IMR-90 (cell line): ENCODE measurements at regions of chr18 and their contacts with region 1.

Region 1: DNA sequence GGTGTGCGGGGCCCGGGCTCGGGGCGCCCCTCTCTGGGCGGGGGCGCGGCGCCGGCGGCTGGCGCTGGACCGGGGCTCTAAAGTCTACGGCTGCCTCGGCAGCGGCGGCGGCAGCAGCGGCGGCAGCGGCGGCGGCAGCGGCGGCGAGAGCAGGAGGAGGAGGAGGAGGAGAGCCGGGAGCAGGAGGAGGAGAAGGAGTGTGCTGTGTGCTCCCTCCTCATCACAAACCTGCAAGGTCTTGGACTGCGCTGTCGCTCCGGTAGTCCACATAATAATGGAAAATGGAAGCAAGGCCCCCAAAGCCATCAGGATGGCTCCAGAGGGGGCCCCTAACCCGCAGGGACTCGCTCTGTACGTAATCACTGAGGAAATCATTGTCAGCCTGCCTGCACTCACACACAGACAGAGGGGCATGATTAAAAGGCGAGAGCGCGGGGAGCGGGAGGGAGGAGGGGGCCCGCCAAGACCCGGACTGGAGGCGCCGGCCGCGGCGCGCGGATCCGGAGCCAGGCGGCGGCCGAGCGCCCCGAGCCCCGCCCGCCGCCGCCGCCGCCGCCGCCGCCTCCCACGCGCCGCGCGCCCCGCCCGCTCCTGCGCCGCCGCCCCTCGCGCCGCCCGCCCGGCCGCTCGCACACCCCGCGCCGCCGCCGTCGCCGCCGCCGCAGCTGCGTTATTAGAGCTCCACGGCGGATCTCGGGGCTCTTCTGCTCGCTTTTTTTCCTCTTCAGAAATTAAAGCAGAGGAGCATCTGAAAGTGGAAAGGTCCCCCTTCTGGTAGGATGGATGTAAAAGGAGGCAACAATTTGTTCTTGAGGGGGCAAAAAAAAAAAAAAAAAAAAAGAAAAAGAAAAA is at the start of gene ZNF521:
- DNase-seq: peak; percentile 92
- ATAC-seq: peak; percentile 87
- H3K4me3 ChIP-seq: peak within 1 kb of the TSS; percentile 97
- H3K27ac ChIP-seq: peak within 1 kb of the TSS; percentile 99
- H3K4me1 ChIP-seq: 0 out of 2 replicates have a peak, but pooled peaks cover 2% of the 10 kb centered on the region
- H3K27me3 ChIP-seq: no peaks in the 10 kb centered on the region
- CTCF ChIP-seq: peak; percentile 49
- POLR2A ChIP-seq: peak; percentile 59; the same call in 1 of the 2 replicates
- RAD21 ChIP-seq: peak; percentile 53
- total RNA-seq, gene ZNF521: 44.7 and 59.3 TPM in 2 replicates

Region 2: DNA sequence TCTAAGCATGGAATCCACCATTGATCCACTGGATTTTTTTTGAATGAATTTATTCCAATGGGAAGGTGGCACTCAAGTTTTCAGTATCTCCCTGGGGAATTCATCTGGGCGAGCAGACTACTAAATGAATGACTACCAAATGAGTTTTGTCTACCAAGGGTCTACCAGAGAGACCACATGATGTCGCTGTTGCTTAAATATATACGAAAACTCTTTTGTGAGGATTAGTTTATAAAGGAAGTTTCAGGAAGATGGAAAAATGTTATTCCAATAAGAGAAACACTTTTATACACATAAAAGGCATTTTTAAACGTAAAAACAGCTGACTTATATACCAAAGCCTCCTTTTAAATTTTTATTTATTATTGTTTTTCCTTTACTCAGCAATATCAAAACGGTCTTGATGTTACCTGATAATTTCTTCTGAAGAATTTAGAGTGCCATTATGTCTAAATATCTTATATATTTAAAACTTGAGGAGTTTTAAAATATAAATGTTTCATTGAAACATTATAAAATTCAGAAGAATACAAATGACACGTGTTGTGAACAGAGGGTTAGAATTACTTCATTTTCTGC is 751.8 kb before region 1 on chr18:
- CTCF ChIA-PET with region 1: no interaction called
- POLR2A ChIA-PET with region 1: interaction called, 4 read pairs
- dilution Hi-C with region 1: no loop called
- in situ Hi-C with region 1: no loop called
- intact Hi-C with region 1: loop called (anchors 10 kb)
- DNase-seq: peak; percentile 75
- ATAC-seq: peak; percentile 79
- H3K4me3 ChIP-seq: no peak overlapping the region
- H3K27ac ChIP-seq: no peak overlapping the region
- H3K4me1 ChIP-seq: peaks cover 2% of the 10 kb centered on the region; the same call in 1 of the 2 replicates
- H3K27me3 ChIP-seq: peaks cover 24% of the 10 kb centered on the region
- CTCF ChIP-seq: peak; percentile 83
- POLR2A ChIP-seq: no peak
- RAD21 ChIP-seq: peak; percentile 83

Region 3: DNA sequence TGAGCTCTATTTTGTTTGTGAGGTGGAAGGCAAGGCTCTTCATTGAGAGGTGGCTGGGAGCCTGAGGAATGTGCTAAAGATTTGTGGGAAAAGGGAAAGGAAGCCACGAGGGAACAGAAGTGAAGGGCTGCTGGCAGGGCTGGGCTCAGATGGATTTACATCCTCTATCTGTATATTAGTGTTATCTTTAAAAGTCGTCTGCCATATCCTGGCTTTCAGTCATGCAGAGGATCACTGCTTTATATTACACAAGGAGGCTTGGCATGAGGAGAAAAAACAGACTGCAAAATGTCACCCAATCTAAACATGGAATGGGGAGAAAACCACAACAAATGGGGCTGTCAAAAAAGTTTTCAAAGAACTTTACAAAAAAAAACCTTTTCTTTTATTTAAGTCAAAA is 457.1 kb before region 1 on chr18:
- CTCF ChIA-PET with region 1: no interaction called
- POLR2A ChIA-PET with region 1: no interaction called
- dilution Hi-C with region 1: no loop called
- in situ Hi-C with region 1: no loop called
- intact Hi-C with region 1: no loop called
- DNase-seq: peak; percentile 20
- ATAC-seq: peak; percentile 57
- H3K4me3 ChIP-seq: no peak overlapping the region
- H3K27ac ChIP-seq: peak overlapping the region; percentile 2; the same call in 1 of the 2 replicates
- H3K4me1 ChIP-seq: peaks cover 11% of the 10 kb centered on the region
- H3K27me3 ChIP-seq: no peaks in the 10 kb centered on the region; the same call in 1 of the 2 replicates
- CTCF ChIP-seq: no peak
- POLR2A ChIP-seq: no peak
- RAD21 ChIP-seq: no peak

Region 4: DNA sequence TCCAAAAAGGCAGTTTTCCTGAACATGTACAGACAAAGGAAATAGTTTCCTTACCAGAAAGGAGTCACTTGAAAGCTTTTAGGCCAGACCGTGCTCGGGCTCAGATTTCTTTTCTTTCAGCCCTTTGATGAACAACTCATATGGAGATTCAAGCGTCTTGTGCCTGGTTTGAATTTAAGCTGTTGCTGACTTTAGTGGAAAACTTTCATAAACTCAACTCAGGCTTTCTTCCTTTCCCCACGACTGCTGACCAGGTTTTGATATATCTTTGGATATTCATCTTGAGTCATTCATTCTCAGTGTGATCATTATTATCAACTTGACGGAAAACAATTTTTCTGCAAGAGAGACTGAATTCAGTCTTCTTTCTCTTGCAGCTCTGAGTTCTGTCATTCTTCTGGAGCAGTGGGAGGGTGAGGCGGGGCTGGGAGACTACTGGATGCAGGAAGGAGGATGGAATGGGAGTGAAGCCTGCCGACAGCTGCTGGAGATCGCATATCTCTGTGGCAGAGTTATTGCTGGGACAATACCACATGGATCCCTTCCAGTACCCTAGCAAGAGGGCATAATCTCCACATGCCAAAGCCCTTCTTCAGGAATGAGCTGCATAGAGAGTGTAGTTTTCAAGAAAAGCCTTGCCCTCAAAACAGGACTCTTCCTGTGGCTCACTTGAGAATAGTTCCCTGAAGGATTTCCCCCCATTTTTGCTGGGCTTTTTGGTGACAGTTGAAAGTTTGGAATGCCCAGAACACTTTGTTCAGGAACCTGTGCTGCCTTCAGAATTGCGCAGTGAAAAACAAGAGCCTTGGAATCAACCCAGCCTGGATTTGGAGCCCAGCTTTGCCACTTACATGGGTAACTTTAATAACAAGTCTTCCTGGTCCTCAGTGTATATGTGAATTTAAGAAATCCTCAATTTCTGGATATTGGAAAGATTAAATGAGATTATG is 364.4 kb before region 1 on chr18:
- CTCF ChIA-PET with region 1: no interaction called
- POLR2A ChIA-PET with region 1: no interaction called
- dilution Hi-C with region 1: no loop called
- in situ Hi-C with region 1: no loop called
- intact Hi-C with region 1: loop called (anchors 5 kb)
- DNase-seq: peak; percentile 35
- ATAC-seq: peak; percentile 52
- H3K4me3 ChIP-seq: no peak overlapping the region
- H3K27ac ChIP-seq: peak overlapping the region; percentile 44; the same call in 1 of the 2 replicates
- H3K4me1 ChIP-seq: peaks cover 18% of the 10 kb centered on the region
- H3K27me3 ChIP-seq: no peaks in the 10 kb centered on the region
- CTCF ChIP-seq: no peak
- POLR2A ChIP-seq: no peak
- RAD21 ChIP-seq: no peak

Region 5: GRCh38 chr18:25230658-25231326 is 121.2 kb before region 1 on chr18:
- CTCF ChIA-PET with region 1: no interaction called
- POLR2A ChIA-PET with region 1: interaction called, 4 read pairs
- dilution Hi-C with region 1: no loop called
- in situ Hi-C with region 1: no loop called
- intact Hi-C with region 1: loop called (anchors 5 kb)
- DNase-seq: peak; percentile 90
- ATAC-seq: peak; percentile 83
- H3K4me3 ChIP-seq: peak overlapping the region; percentile 11; the same call in 1 of the 2 replicates
- H3K27ac ChIP-seq: peak overlapping the region; percentile 84
- H3K4me1 ChIP-seq: peaks cover 13% of the 10 kb centered on the region
- H3K27me3 ChIP-seq: no peaks in the 10 kb centered on the region
- CTCF ChIP-seq: no peak
- POLR2A ChIP-seq: no peak
- RAD21 ChIP-seq: peak; percentile 29

Region 6: GRCh38 chr18:25464227-25464626 is 112.2 kb after region 1 on chr18:
- CTCF ChIA-PET with region 1: interaction called, 10 read pairs
- POLR2A ChIA-PET with region 1: interaction called, 5 read pairs
- dilution Hi-C with region 1: no loop called
- in situ Hi-C with region 1: no loop called
- intact Hi-C with region 1: loop called (anchors 5 kb)
- DNase-seq: peak; percentile 95
- ATAC-seq: peak; percentile 88
- H3K4me3 ChIP-seq: no peak overlapping the region
- H3K27ac ChIP-seq: peak overlapping the region; percentile 92
- H3K4me1 ChIP-seq: peaks cover 35% of the 10 kb centered on the region
- H3K27me3 ChIP-seq: no peaks in the 10 kb centered on the region
- CTCF ChIP-seq: no peak
- POLR2A ChIP-seq: no peak
- RAD21 ChIP-seq: no peak

Region 7: DNA sequence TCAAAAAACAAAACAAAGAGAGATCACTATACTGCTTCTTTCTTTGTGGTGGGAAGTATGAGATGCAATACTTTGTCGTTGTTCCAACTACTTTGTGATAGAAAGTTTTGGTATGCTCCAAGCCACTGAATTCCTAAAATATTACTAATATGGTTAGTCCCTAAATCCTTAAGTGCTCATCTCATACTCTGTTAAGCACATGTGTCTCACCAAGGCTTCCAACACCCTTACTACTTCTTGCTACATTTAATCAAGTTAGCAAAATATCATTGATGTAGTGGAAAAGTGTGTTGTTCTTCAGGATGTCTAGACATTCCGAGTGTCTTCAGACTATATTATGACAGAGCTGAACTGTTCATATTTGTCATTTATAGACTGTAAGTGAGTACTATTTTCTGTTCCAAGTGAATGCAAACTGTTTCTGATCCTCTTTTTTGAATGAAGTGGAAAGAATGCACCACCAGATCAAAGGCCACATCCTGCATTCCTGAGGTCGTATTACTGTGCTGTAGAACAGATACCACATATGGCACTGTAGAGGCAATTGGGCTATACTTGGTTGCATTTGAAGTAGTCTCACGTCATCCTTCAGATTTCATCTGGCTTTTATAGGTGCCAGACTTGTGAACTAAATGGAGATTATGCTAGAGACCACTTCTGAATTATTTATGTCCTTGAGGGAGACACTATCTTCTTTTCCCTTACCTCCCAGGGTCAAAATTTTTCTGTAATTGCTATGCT is 298.4 kb after region 1 on chr18:
- CTCF ChIA-PET with region 1: no interaction called
- POLR2A ChIA-PET with region 1: no interaction called
- dilution Hi-C with region 1: no loop called
- in situ Hi-C with region 1: no loop called
- intact Hi-C with region 1: loop called (anchors 2 kb)
- DNase-seq: peak; percentile 97
- ATAC-seq: peak; percentile 87
- H3K4me3 ChIP-seq: no peak overlapping the region
- H3K27ac ChIP-seq: peak overlapping the region; percentile 79
- H3K4me1 ChIP-seq: peaks cover 10% of the 10 kb centered on the region
- H3K27me3 ChIP-seq: no peaks in the 10 kb centered on the region
- CTCF ChIP-seq: no peak
- POLR2A ChIP-seq: no peak
- RAD21 ChIP-seq: no peak

Region 8: GRCh38 chr18:25896178-25896780 is 544.3 kb after region 1 on chr18:
- CTCF ChIA-PET with region 1: no interaction called
- POLR2A ChIA-PET with region 1: no interaction called
- dilution Hi-C with region 1: no loop called
- in situ Hi-C with region 1: no loop called
- intact Hi-C with region 1: loop called (anchors 2 kb)
- DNase-seq: peak; percentile 58
- ATAC-seq: peak; percentile 87
- H3K4me3 ChIP-seq: no peak overlapping the region
- H3K27ac ChIP-seq: no peak overlapping the region
- H3K4me1 ChIP-seq: no peaks in the 10 kb centered on the region
- H3K27me3 ChIP-seq: peaks cover 6% of the 10 kb centered on the region
- CTCF ChIP-seq: peak; percentile 83
- POLR2A ChIP-seq: no peak
- RAD21 ChIP-seq: peak; percentile 87